Panc1 (cell line): ENCODE measurements at regions of chr1 and their contacts with region 1.

Region 1: GRCh38 chr1:240424740-240425464 is 187.1 kb downstream of the GREM2 start:
- DNase-seq: no peak
- ATAC-seq: no peak
- H3K4me3 ChIP-seq: no peak overlapping the region
- H3K27ac ChIP-seq: no peak overlapping the region
- H3K4me1 ChIP-seq: no peaks in the 10 kb centered on the region
- H3K27me3 ChIP-seq: no peaks in the 10 kb centered on the region
- CTCF ChIP-seq: no peak

Region 2: GRCh38 chr1:240136402-240136801 is 288.5 kb before region 1 on chr1:
- CTCF ChIA-PET with region 1: no interaction called
- POLR2A ChIA-PET with region 1: no interaction called
- in situ Hi-C with region 1: no loop called
- intact Hi-C with region 1: no loop called
- DNase-seq: no peak
- ATAC-seq: no peak
- H3K4me3 ChIP-seq: no peak overlapping the region
- H3K27ac ChIP-seq: no peak overlapping the region
- H3K4me1 ChIP-seq: no peaks in the 10 kb centered on the region
- H3K27me3 ChIP-seq: no peaks in the 10 kb centered on the region
- CTCF ChIP-seq: no peak

Region 3: GRCh38 chr1:240414237-240414636 is 10.7 kb before region 1 on chr1:
- CTCF ChIA-PET with region 1: no interaction called
- POLR2A ChIA-PET with region 1: no interaction called
- in situ Hi-C with region 1: no loop called
- intact Hi-C with region 1: no loop called
- DNase-seq: no peak
- ATAC-seq: no peak
- H3K4me3 ChIP-seq: no peak overlapping the region
- H3K27ac ChIP-seq: no peak overlapping the region
- H3K4me1 ChIP-seq: no peaks in the 10 kb centered on the region
- H3K27me3 ChIP-seq: no peaks in the 10 kb centered on the region
- CTCF ChIP-seq: no peak

Region 4: GRCh38 chr1:240441684-240442083 is 16.8 kb after region 1 on chr1:
- CTCF ChIA-PET with region 1: no interaction called
- POLR2A ChIA-PET with region 1: no interaction called
- in situ Hi-C with region 1: no loop called
- intact Hi-C with region 1: loop called (anchors 1 kb)
- DNase-seq: no peak
- ATAC-seq: no peak
- H3K4me3 ChIP-seq: no peak overlapping the region
- H3K27ac ChIP-seq: no peak overlapping the region
- H3K4me1 ChIP-seq: no peaks in the 10 kb centered on the region
- H3K27me3 ChIP-seq: no peaks in the 10 kb centered on the region
- CTCF ChIP-seq: no peak